ENCODE measurements at regions of chr17 and their contacts with region 1.

Region 1: DNA sequence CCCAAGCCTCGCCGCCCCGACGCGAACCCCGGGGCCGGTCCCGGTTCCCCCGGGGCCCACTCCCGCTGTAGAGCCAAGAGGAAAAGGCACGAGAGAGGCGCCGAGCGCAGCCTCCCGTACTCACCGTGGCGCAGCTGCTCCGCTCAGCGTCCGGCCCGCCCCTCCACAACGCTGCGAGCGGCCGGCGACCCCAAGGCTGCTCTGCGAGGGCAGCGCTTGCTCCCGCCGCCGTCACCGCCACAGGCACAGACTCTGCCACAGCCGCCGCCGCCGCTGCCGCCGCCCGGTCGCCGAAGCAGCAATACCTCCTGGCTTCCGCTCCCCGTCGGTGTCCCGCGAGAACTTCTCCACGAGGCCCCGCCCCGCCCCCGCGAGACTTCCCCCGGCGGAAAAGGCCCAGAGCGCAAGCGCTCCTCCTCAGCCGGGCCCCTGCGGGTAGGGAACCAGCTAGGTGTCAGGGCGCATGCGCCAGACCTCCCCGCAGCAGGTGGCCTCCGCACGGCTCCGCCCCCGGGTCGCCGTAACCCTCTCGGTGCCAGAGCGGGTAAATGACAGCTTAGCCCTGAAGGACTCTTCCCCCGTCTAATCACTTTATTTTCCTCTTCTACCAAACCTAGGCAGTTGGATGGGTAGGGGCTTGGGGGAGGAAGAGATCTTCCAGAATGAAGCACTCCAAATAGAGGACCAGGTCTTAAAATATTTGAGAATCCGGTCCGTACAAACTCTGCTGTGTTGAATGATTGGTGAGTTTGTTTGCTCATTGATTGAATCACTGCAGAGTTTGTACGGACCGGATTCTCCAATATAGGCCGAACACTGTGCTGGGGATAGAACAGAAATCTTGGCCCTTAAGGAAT is at the start of gene GRB2:
- DNase-seq: peak; percentile 58
- H3K4me3 ChIP-seq: peak within 1 kb of the TSS; percentile 93
- H3K27me3 ChIP-seq: peaks cover 5% of the 10 kb centered on the region; the same call in 1 of the 2 replicates
- CTCF ChIP-seq: no peak
- polyA plus RNA-seq, gene GRB2: 46.5 and 50.7 TPM in 2 replicates

Region 2: DNA sequence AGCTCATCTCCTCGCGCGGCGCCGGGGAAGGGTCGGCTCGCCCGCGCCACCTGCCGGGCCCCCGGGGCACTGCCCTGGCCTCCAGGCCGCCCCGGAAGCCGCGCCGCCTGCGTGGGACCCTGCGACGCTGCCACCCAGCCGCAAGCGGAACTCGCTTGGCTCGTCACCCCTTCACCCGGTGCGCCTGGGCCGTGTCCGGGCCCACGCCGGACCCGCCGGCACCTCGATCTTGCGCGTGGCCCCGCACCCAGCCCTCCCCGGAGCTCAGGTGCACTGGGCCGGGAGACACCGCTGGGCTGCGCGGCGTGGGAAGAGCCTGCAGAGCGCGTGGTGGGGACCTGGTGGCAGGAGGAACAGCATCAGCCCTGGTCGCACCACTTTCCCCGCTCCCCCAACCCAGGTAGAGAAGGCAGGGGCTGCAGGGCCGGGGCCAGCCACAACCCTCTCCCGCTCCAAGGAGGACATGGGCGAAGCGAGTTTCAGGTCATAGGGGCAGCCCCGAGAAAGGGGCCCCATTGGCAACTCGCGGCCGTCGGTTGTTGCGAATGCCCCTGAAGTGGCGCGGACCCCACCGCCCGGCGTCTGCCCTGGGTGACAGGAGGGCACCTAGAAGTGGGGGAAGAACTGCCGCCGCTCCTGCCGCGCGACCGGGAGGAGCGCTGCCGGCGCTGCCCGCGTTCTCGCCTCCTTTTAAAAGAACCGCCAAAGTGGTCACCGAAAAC is 134.2 kb before region 1 on chr17:
- CTCF ChIA-PET with region 1: interaction called, 12 read pairs
- POLR2A ChIA-PET with region 1: no interaction called
- DNase-seq: no peak
- H3K4me3 ChIP-seq: peak overlapping the region; percentile 71
- H3K27me3 ChIP-seq: no peaks in the 10 kb centered on the region
- CTCF ChIP-seq: peak; percentile 7

Region 3: DNA sequence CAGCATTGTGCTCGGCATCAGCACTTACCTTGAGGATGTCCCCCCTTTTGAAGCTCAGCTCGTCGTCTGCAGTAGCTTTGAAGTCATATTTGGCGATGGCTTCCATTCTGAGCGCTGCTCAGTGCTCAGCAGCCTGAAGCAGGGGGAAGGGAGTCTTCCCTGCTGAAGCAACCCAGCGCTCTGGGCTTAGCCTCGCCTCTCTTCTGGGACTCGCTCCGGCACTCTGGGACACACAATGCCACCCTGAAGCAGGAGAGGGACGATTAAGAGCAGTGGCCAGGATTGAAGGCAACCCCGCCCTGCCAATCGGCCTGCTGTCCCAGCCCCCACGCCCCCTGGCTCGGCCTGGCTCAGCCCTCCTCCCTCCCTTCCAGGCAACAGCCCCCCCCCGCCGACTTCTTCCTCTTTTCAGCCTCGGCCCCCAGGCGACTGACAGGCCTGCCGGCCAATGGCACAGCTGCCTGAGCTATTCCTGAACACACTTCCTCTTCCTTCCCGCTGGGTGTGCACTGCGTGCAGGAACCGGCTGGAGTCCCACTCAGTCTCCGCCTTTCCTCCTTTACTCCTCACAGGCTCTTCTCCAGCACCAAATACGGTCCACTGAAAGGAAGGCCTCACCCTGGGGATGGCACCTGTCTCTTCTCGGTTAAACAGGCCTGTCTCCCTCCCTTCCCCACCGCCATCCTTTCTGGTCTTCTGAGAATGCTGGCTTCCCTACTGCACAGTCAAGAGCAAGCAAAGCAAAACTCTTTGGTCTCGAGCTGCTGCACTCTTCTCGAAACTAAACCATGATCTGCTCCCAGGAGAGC is 11.9 kb before region 1 on chr17:
- CTCF ChIA-PET with region 1: interaction called, 12 read pairs
- POLR2A ChIA-PET with region 1: no interaction called
- DNase-seq: peak; percentile 91
- H3K4me3 ChIP-seq: peak overlapping the region; percentile 54
- H3K27me3 ChIP-seq: no peaks in the 10 kb centered on the region
- CTCF ChIP-seq: 0 out of 2 replicates have a peak, but pooled peaks have one; percentile 9